PC-9 (cell line): ENCODE measurements at regions of chr20 and their contacts with region 1.

Region 1: GRCh38 chr20:10434467-10434831 is 427 bp upstream of the MKKS start:
- DNase-seq: peak; percentile 94 to 95
- H3K4me3 ChIP-seq: peak overlapping the region; percentile 90
- H3K27ac ChIP-seq: peak overlapping the region; percentile 96
- H3K4me1 ChIP-seq: no peaks in the 10 kb centered on the region; the same call in 1 of the 2 replicates
- H3K27me3 ChIP-seq: no peaks in the 10 kb centered on the region
- CTCF ChIP-seq: no peak

Region 2: GRCh38 chr20:10219452-10219791 is 215.0 kb before region 1 on chr20:
- CTCF ChIA-PET with region 1: no interaction called
- POLR2A ChIA-PET with region 1: no interaction called
- intact Hi-C with region 1: loop called (anchors 10 kb)
- DNase-seq: peak in 1 of 2 experiments; percentile 62
- H3K4me3 ChIP-seq: no peak overlapping the region
- H3K27ac ChIP-seq: no peak overlapping the region
- H3K4me1 ChIP-seq: no peaks in the 10 kb centered on the region
- H3K27me3 ChIP-seq: peaks cover 16% of the 10 kb centered on the region
- CTCF ChIP-seq: no peak

Region 3: GRCh38 chr20:10501402-10501801 is 67.0 kb after region 1 on chr20:
- CTCF ChIA-PET with region 1: no interaction called
- POLR2A ChIA-PET with region 1: no interaction called
- intact Hi-C with region 1: no loop called
- DNase-seq: no peak
- H3K4me3 ChIP-seq: no peak overlapping the region
- H3K27ac ChIP-seq: no peak overlapping the region
- H3K4me1 ChIP-seq: no peaks in the 10 kb centered on the region
- H3K27me3 ChIP-seq: no peaks in the 10 kb centered on the region
- CTCF ChIP-seq: no peak

Region 4: GRCh38 chr20:10521068-10521831 is 86.8 kb after region 1 on chr20:
- CTCF ChIA-PET with region 1: no interaction called
- POLR2A ChIA-PET with region 1: no interaction called
- intact Hi-C with region 1: no loop called
- DNase-seq: no peak
- H3K4me3 ChIP-seq: no peak overlapping the region
- H3K27ac ChIP-seq: no peak overlapping the region
- H3K4me1 ChIP-seq: peaks cover 9% of the 10 kb centered on the region; the same call in 1 of the 2 replicates
- H3K27me3 ChIP-seq: no peaks in the 10 kb centered on the region
- CTCF ChIP-seq: no peak

Region 5: GRCh38 chr20:10536531-10536930 is 102.1 kb after region 1 on chr20:
- CTCF ChIA-PET with region 1: interaction called, 3 read pairs
- POLR2A ChIA-PET with region 1: no interaction called
- intact Hi-C with region 1: loop called (anchors 1 kb)
- DNase-seq: peak; percentile 30 to 45
- H3K4me3 ChIP-seq: no peak overlapping the region
- H3K27ac ChIP-seq: no peak overlapping the region
- H3K4me1 ChIP-seq: peaks cover 50% of the 10 kb centered on the region
- H3K27me3 ChIP-seq: no peaks in the 10 kb centered on the region
- CTCF ChIP-seq: peak; percentile 64

Region 6: GRCh38 chr20:10596726-10597125 is 162.3 kb after region 1 on chr20:
- CTCF ChIA-PET with region 1: interaction called, 3 read pairs
- POLR2A ChIA-PET with region 1: interaction called, 7 read pairs
- intact Hi-C with region 1: loop called (anchors 2 kb)
- DNase-seq: no peak
- H3K4me3 ChIP-seq: no peak overlapping the region
- H3K27ac ChIP-seq: no peak overlapping the region
- H3K4me1 ChIP-seq: peaks cover 38% of the 10 kb centered on the region
- H3K27me3 ChIP-seq: no peaks in the 10 kb centered on the region
- CTCF ChIP-seq: no peak

Region 7: GRCh38 chr20:11274141-11274594 is 839.7 kb after region 1 on chr20:
- CTCF ChIA-PET with region 1: no interaction called
- POLR2A ChIA-PET with region 1: no interaction called
- intact Hi-C with region 1: loop called (anchors 2 kb)
- DNase-seq: peak; percentile 30 to 61
- H3K4me3 ChIP-seq: no peak overlapping the region
- H3K27ac ChIP-seq: no peak overlapping the region
- H3K4me1 ChIP-seq: peaks cover 3% of the 10 kb centered on the region; the same call in 1 of the 2 replicates
- H3K27me3 ChIP-seq: no peaks in the 10 kb centered on the region
- CTCF ChIP-seq: peak; percentile 76

Region 8: GRCh38 chr20:11379257-11380011 is 945.0 kb after region 1 on chr20:
- CTCF ChIA-PET with region 1: no interaction called
- POLR2A ChIA-PET with region 1: no interaction called
- intact Hi-C with region 1: loop called (anchors 10 kb)
- DNase-seq: no peak
- H3K4me3 ChIP-seq: no peak overlapping the region
- H3K27ac ChIP-seq: no peak overlapping the region
- H3K4me1 ChIP-seq: peaks cover 16% of the 10 kb centered on the region
- H3K27me3 ChIP-seq: no peaks in the 10 kb centered on the region
- CTCF ChIP-seq: no peak

Region 9: GRCh38 chr20:11890331-11891080 is 1456.1 kb after region 1 on chr20:
- CTCF ChIA-PET with region 1: no interaction called
- POLR2A ChIA-PET with region 1: no interaction called
- intact Hi-C with region 1: loop called (anchors 10 kb)
- DNase-seq: peak; percentile 67 to 95
- H3K4me3 ChIP-seq: peak overlapping the region; percentile 91
- H3K27ac ChIP-seq: peak overlapping the region; percentile 49; the same call in 1 of the 2 replicates
- H3K4me1 ChIP-seq: peaks cover 17% of the 10 kb centered on the region
- H3K27me3 ChIP-seq: no peaks in the 10 kb centered on the region
- CTCF ChIP-seq: no peak